Naive thymus-derived CD4-positive, alpha-beta T cell (primary cell): ENCODE measurements at regions of chr11 and their contacts with region 1.

Region 1: DNA sequence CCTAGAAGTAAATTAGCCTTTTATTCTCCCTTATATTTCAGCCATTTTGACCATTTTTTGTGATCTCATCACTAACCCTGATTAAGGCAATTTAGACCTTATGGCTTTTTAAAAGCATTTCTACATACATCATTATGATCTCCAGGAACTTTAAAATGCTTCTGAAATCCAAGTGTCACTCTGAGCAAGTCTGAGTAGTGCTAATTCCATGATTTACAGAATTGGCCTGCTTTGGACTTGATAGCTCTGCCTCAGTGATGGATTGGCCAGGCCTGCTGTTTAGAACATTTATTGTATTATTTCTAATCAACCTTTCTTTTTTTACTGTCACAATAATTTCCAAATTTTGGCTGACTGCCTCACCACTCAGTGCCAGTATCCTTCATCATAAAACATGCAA is 116.4 kb downstream of the KCNA4 start:
- DNase-seq: no peak
- ATAC-seq: no peak
- H3K4me3 ChIP-seq: no peak overlapping the region
- H3K4me3 Mint-ChIP-seq: no peak overlapping the region
- H3K27ac ChIP-seq: no peak overlapping the region
- H3K27ac Mint-ChIP-seq: no peak overlapping the region
- H3K4me1 ChIP-seq: no peaks in the 10 kb centered on the region
- H3K4me1 Mint-ChIP-seq: no peaks in the 10 kb centered on the region
- H3K27me3 ChIP-seq: no peaks in the 10 kb centered on the region
- H3K27me3 Mint-ChIP-seq: no peaks in the 10 kb centered on the region

Region 2: GRCh38 chr11:29707924-29708323 is 192.5 kb before region 1 on chr11:
- CTCF ChIA-PET with region 1: no interaction called
- POLR2A ChIA-PET with region 1: no interaction called
- intact Hi-C with region 1: loop called in 1 of 2 experiments (anchors 10 kb)
- DNase-seq: no peak
- ATAC-seq: no peak
- H3K4me3 ChIP-seq: no peak overlapping the region
- H3K4me3 Mint-ChIP-seq: no peak overlapping the region
- H3K27ac ChIP-seq: no peak overlapping the region
- H3K27ac Mint-ChIP-seq: no peak overlapping the region
- H3K4me1 ChIP-seq: no peaks in the 10 kb centered on the region
- H3K4me1 Mint-ChIP-seq: no peaks in the 10 kb centered on the region
- H3K27me3 ChIP-seq: no peaks in the 10 kb centered on the region
- H3K27me3 Mint-ChIP-seq: no peaks in the 10 kb centered on the region

Region 3: DNA sequence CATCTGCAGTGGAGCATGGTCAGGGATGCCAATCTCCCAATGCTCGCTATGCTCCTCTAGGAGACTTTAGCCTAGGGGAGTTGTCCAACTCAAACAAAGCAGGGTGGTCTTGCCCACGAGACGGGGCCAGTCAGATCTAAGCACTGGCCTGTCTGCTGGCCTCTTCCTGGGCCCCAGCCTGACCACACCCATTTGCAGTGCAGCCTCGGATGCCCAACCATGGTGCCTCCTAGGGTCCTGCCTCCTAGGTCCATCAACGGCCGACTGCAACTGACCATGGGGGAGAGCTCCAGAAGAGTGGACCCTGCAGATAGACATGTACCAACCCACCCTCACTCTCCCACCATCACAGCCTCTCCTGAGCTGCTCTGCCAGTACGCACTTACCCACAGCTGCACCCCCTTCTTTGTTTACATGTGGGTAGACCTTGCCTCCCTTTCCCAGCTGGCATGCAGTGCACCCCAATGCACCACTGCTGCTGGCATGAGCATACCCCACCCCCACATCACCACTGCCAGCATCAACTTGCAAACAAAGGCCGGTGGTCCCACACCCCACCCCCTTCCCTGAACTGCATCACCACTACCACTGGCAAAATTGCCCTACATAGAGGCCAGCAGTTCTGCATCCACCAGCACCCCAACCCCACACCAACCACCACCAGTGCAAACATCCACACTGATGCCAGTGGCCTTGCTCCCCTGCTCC is 394.9 kb after region 1 on chr11:
- CTCF ChIA-PET with region 1: no interaction called
- POLR2A ChIA-PET with region 1: no interaction called
- intact Hi-C with region 1: no loop called
- DNase-seq: no peak
- ATAC-seq: no peak
- H3K4me3 ChIP-seq: no peak overlapping the region
- H3K4me3 Mint-ChIP-seq: no peak overlapping the region
- H3K27ac ChIP-seq: no peak overlapping the region
- H3K27ac Mint-ChIP-seq: no peak overlapping the region
- H3K4me1 ChIP-seq: no peaks in the 10 kb centered on the region
- H3K4me1 Mint-ChIP-seq: no peaks in the 10 kb centered on the region
- H3K27me3 ChIP-seq: no peaks in the 10 kb centered on the region
- H3K27me3 Mint-ChIP-seq: peaks cover 9 to 19% (median 10%) of the 10 kb centered on the region in 5 donors